ENCODE measurements at regions of chr16 and their contacts with region 1.

Region 1: DNA sequence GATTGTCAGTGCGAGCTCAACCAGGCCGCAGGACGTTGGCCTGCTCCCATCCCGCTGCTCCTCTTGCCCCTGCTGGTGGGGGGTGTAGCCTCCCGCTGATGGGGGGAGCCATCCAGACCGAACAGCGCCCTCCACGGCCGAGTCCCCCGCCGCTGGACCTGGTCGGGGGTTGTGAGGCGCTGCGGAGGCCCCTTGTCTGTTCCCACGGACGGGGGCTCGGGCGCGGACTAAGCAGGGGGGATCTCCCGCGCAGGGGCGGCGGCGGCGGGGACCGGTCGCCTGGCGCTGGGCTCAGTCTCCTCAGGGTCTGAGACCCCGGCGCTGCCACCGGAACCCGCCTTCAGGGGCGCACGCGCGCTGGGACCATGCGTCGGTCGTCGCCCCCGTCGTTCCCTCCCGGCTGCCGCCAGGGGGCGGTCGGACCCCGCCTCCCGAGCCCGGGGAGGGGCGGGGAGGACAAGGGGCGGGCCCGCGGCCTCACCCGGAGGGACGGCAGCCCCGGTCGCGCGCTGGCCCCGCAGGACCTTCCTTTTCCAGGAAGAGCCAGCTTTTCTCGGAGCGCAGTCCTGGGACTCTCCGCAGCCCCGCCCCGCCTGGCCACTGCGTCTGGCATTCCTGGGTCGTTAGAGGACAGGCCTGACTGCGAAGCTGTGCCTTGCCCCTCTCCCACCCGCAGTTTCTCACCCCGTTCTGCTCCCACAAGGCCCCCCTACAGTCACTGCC is 6.3 kb upstream of the IL32 start:
- DNase-seq: peak; percentile 79 to 84
- ATAC-seq: peak; percentile 89 to 95
- H3K4me3 ChIP-seq: peak overlapping the region; percentile 76
- H3K27ac ChIP-seq: peak overlapping the region; percentile 94 to 99
- H3K4me1 ChIP-seq: peaks cover 10% of the 10 kb centered on the region
- CTCF ChIP-seq: peak; percentile 82
- EP300 ChIP-seq: no peak
- POLR2A ChIP-seq: peak; percentile 53
- RAD21 ChIP-seq: peak; percentile 74 to 94

Region 2: GRCh38 chr16:3023669-3024478 is 35.3 kb before region 1 on chr16 and contains the starts of genes HCFC1R1 and THOC6:
- CTCF ChIA-PET with region 1: interaction called, 20 read pairs
- POLR2A ChIA-PET with region 1: interaction called, 7 read pairs
- DNase-seq: peak; percentile 83 to 99
- ATAC-seq: peak; percentile 17 to 63
- H3K4me3 ChIP-seq: peak within 1 kb of the TSS; percentile 93
- H3K27ac ChIP-seq: peak within 1 kb of the TSS; percentile 98 to 100
- H3K4me1 ChIP-seq: peaks cover 34% of the 10 kb centered on the region
- CTCF ChIP-seq: no peak
- EP300 ChIP-seq: 0 out of 5 replicates have a peak, but pooled peaks of 1 of the 2 experiments have one; percentile 16
- POLR2A ChIP-seq: peak; percentile 69
- RAD21 ChIP-seq: no peak
- polyA plus RNA-seq, gene HCFC1R1: 46.4 and 60.3 TPM in 2 replicates
- polyA plus RNA-seq, gene THOC6: 31.8 and 32.5 TPM in 2 replicates

Region 3: DNA sequence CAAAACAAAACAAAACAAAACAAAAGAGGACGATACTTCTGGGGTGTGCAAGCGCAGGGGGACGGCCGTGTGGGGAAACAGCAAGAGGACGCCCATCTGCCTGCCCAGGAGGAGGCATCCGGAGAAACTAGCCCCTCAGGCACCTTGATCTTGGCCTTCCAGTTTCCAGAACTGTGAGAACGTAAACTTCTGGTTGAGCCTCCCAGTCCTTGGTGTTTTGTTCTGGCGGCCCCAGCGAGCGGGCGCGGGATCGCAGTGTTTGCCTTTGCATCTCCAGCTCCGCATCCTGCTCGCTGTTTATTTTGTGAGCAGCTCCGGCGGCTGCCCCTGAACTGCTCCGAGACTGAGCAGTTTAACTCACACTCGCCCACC is 13.8 kb before region 1 on chr16:
- CTCF ChIA-PET with region 1: interaction called, 53 read pairs
- POLR2A ChIA-PET with region 1: interaction called, 3 read pairs
- DNase-seq: no peak
- ATAC-seq: peak; percentile 58 to 68
- H3K4me3 ChIP-seq: peak overlapping the region; percentile 75
- H3K27ac ChIP-seq: peak overlapping the region; percentile 75 to 84
- H3K4me1 ChIP-seq: peaks cover 3% of the 10 kb centered on the region; the same call in 1 of the 3 replicates
- CTCF ChIP-seq: no peak
- EP300 ChIP-seq: no peak
- POLR2A ChIP-seq: no peak
- RAD21 ChIP-seq: no peak

Region 4: DNA sequence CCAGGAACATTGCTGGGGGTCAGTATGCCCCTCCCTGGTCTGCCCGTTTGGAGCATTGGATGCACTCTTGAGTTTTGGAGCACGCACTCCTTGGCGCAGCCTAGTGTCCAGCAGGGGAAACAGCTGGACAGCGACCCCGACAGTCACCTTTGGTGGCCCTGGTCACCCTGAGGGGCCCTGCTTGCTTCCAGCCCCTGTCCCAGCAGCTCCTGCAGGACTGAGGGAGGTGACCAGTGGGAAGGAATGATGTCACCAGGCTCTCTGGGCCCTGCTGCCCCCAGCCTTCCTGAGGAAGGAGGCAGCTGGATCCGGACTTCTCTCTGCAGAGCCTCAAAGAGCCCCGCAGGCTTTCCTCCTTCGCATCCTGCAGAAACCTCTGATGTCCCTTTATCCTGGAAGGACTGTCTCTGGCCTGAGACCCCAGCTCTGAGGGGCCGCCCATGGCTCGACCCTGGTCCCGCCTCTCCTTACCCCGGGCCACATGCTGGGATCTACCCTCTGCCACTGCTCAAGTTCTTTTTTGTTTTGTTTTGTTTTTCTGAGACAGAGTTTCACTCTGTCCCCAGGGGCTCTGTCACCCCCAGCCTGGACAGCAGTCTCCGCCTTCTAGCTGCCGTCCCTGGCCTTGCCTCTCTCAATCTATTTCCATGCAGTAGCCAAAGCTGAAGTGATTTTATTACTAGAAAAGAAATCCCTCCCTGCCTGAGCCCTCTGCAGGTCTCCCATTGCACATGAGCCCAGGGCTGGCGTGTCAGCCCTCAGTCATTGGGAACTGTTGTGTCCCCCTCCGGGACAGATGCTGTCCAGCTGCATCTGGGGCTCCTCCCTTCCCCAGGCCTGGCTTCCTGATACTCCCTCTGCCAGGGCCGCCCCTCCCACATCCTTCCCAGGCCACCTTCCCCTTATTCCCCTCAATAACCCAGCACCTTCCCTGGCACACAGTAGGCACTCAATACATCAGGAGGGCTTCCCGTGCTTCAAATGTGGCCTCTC is 28.4 kb after region 1 on chr16:
- CTCF ChIA-PET with region 1: interaction called, 31 read pairs
- POLR2A ChIA-PET with region 1: no interaction called
- DNase-seq: peak in 1 of 2 experiments; percentile 26
- ATAC-seq: peak; percentile 64 to 75
- H3K4me3 ChIP-seq: no peak overlapping the region
- H3K27ac ChIP-seq: no peak overlapping the region
- H3K4me1 ChIP-seq: no peaks in the 10 kb centered on the region
- CTCF ChIP-seq: peak; percentile 14; the same call in 1 of the 3 replicates
- EP300 ChIP-seq: no peak
- POLR2A ChIP-seq: no peak
- RAD21 ChIP-seq: 0 out of 5 replicates have a peak, but pooled peaks of 1 of the 2 experiments have one; percentile 6

Region 5: DNA sequence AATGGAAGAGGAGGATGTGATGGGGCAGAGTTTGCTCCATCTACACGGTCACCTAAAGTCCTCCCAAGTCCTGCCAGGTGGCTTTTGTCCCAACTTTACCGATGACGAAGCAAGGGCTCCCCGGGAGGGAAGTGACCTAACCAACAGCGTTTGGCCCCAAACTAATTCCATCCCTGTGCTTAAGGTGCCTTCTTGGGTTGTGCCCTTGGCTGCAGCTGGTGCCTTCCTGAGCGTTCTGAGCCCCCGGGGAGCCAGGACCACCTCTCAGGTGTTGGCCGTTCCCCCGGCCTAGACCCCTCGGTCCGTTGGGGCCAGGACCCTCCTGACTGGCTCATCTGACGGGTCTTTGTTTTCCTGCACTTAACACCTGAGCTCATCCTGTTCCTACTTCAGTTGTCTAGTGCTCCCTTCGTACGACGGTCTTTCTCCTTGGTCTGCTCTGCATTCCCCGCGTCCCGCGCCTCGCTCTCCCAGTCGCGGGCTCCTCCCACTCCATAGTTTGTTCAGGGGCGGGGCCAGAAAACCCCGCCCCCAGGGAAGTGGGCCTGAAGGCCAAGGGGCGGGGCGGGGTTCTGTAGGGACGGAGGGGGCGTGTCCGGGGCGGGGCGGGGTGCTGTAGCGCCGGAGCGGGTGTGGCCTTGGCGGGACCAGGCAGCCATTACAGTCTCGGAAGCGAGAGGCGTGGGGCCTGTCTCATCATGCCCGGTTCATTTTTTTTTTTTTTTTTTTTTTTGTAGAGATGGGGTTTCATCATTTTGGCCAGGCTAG is 40.8 kb after region 1 on chr16:
- CTCF ChIA-PET with region 1: interaction called, 124 read pairs
- POLR2A ChIA-PET with region 1: no interaction called
- DNase-seq: peak; percentile 80 to 92
- ATAC-seq: peak; percentile 75 to 87
- H3K4me3 ChIP-seq: peak overlapping the region; percentile 34; the same call in 2 of the 3 replicates
- H3K27ac ChIP-seq: peak overlapping the region; percentile 69 to 78
- H3K4me1 ChIP-seq: peaks cover 15% of the 10 kb centered on the region
- CTCF ChIP-seq: no peak
- EP300 ChIP-seq: no peak
- POLR2A ChIP-seq: no peak
- RAD21 ChIP-seq: no peak

Region 6: DNA sequence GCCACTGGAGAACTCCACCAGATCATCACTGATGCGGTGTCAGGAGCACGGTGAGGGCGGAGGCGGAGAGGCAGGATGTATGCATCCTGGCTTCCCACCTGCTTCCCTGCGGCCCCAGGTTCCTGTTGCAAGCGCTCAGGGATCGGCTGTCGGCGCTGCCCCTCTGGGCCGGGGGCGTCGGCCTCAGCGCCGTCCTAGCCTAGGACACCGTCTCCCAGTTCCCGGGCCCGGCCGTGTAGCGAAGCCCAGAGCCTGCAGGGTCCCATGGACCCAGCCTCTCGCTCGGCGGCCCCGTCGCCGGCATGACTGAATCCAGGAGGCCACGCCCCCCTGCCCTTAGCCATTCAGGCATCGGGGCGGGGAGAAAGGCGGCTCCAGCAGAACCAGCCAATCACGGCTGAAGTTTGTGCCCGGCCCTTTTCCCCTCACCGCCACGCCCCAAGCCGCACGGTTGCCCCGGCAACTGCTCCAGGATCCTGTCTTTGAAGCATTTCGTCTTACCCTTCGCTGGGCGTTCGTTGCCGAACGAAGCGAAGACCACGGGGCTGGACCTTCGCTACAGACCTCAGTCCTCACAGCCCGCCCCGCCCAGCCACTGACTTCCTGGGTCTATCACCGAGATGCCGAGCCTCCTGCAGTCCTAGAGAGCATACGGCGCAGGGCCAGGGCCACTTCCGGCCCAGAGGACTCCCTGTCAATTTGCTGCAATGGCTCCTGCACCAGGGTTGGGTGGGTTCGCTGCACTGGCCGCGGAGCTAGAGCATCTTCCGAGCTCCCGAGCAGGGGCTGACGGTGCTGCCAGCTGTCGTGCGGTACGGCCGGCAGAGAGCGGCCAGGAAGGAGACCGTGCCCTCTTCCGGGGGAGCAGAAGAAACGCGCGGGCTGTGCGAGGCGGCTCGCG is 65.1 kb after region 1 on chr16:
- CTCF ChIA-PET with region 1: interaction called, 186 read pairs
- POLR2A ChIA-PET with region 1: interaction called, 15 read pairs
- DNase-seq: peak; percentile 81 to 92
- ATAC-seq: peak; percentile 92 to 94
- H3K4me3 ChIP-seq: peak overlapping the region; percentile 88
- H3K27ac ChIP-seq: peak overlapping the region; percentile 82 to 86
- H3K4me1 ChIP-seq: peaks cover 12% of the 10 kb centered on the region; the same call in 1 of the 3 replicates
- CTCF ChIP-seq: no peak
- EP300 ChIP-seq: no peak
- POLR2A ChIP-seq: peak; percentile 68
- RAD21 ChIP-seq: no peak